G401 (cell line): ENCODE measurements at regions of chr1 and their contacts with region 1.

Region 1: GRCh38 chr1:24673336-24673735 is 30.2 kb downstream of the SRRM1 start:
- DNase-seq: no peak

Region 2: GRCh38 chr1:24438423-24438901 is 234.9 kb before region 1 on chr1:
- in situ Hi-C with region 1: no loop called
- DNase-seq: peak; percentile 97

Region 3: DNA sequence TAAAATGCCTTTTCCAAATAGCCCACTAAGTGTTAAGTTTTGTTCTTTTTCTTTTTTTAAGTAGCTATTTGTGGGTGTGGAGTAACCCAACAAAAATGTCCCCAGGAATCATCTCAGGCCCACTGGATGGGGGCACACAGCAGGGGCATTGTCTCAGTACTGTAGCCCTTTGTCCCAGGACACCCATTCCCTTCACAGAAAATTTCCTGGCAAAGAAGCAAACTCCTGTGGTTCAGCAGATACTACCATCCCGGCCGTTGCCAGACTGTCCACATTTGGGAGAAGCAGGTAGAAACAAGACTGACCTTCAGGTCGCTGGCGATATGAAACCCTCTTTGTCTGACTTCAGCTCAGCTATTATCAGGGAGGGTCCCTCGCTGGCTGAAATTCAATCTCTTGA is 54.0 kb before region 1 on chr1:
- in situ Hi-C with region 1: no loop called
- DNase-seq: no peak

Region 4: GRCh38 chr1:24847995-24848881 is 174.9 kb after region 1 on chr1:
- in situ Hi-C with region 1: loop called (anchors 25 kb)
- DNase-seq: peak; percentile 52